Activated naive CD4-positive, alpha-beta T cell treated with anti-CD3 and anti-CD28 coated beads for 36 hours (primary cell): ENCODE measurements at regions of chr6 and their contacts with region 1.

Region 1: GRCh38 chr6:3732345-3733141 is 19.0 kb downstream of the PXDC1 start:
- DNase-seq: peak; percentile 75
- H3K4me3 Mint-ChIP-seq: no peak overlapping the region
- H3K27ac Mint-ChIP-seq: no peak overlapping the region
- H3K4me1 Mint-ChIP-seq: peaks cover 2% of the 10 kb centered on the region
- H3K27me3 Mint-ChIP-seq: peaks cover 3% of the 10 kb centered on the region

Region 2: GRCh38 chr6:3281631-3282475 is 450.7 kb before region 1 on chr6:
- CTCF ChIA-PET with region 1: interaction called, 13 read pairs
- intact Hi-C with region 1: loop called (anchors 1 kb)
- DNase-seq: no peak
- H3K4me3 Mint-ChIP-seq: no peak overlapping the region
- H3K27ac Mint-ChIP-seq: no peak overlapping the region
- H3K4me1 Mint-ChIP-seq: peaks cover 2% of the 10 kb centered on the region
- H3K27me3 Mint-ChIP-seq: no peaks in the 10 kb centered on the region

Region 3: GRCh38 chr6:3410385-3411360 is 321.9 kb before region 1 on chr6:
- CTCF ChIA-PET with region 1: interaction called, 5 read pairs
- intact Hi-C with region 1: loop called (anchors 1 kb)
- DNase-seq: peak; percentile 82
- H3K4me3 Mint-ChIP-seq: no peak overlapping the region
- H3K27ac Mint-ChIP-seq: no peak overlapping the region
- H3K4me1 Mint-ChIP-seq: peaks cover 21% of the 10 kb centered on the region
- H3K27me3 Mint-ChIP-seq: no peaks in the 10 kb centered on the region

Region 4: GRCh38 chr6:3721810-3722626 is 10.5 kb before region 1 on chr6:
- CTCF ChIA-PET with region 1: interaction called, 10 read pairs
- intact Hi-C with region 1: no loop called
- DNase-seq: no peak
- H3K4me3 Mint-ChIP-seq: no peak overlapping the region
- H3K27ac Mint-ChIP-seq: no peak overlapping the region
- H3K4me1 Mint-ChIP-seq: no peaks in the 10 kb centered on the region
- H3K27me3 Mint-ChIP-seq: no peaks in the 10 kb centered on the region